Caco-2 (cell line): ENCODE measurements at regions of chr2 and their contacts with region 1.

Region 1: DNA sequence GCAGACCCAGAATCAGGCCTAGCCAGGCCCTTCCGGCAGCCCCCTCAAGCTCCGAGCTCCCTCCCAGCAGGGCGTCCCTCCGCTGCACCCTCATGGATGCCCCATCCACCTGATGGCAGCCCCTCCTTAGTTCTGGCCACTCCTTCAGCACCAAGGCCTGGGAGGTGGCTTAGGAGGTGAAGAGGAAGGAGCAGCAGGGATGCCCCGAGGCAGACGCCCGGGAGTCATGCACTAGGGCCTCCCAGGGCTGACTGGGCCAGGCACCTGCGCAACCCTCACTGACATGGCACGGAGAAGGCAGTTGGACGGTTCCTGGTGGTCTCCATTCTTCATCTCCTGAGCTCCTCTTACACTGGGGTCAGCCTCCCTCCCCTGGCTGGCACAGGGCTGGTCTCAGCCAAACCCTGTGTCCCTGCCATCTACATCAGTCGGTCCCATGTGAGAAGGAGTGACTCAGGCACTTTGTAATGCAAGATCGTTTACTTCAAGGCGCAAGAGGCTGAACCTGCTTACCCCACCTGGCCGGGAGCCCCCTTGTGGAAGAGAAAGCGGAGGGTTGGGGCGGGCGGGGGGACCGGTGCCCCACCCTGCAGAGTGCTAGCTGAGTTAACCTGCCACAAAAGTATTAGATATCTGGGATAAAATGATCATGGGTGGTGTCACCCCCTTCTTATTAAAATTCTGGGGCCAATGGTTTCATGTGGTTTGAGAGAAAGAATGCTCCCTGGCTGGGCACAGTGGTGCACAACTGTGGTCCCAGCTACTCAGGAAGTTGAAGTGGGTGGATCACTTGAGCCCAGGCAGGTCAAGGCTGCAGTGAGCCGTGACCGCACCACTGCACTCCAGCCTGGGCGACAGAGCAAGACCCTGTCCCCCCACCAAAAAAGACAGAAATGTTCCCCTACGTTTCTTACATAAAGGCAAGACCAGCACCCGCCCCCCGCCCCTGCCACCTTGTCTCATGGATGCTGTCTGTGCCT is 53.3 kb upstream of the ID2 start:
- DNase-seq: no peak
- H3K4me3 ChIP-seq: no peak overlapping the region
- H3K4me3 Mint-ChIP-seq: peak overlapping the region; percentile 51
- H3K27ac Mint-ChIP-seq: peak overlapping the region; percentile 65
- H3K4me1 ChIP-seq: peaks cover 90% of the 10 kb centered on the region
- H3K4me1 Mint-ChIP-seq: peaks cover 31% of the 10 kb centered on the region
- H3K27me3 ChIP-seq: no peaks in the 10 kb centered on the region
- H3K27me3 Mint-ChIP-seq: no peaks in the 10 kb centered on the region
- CTCF ChIP-seq: peak in 1 of 2 experiments; percentile 4

Region 2: DNA sequence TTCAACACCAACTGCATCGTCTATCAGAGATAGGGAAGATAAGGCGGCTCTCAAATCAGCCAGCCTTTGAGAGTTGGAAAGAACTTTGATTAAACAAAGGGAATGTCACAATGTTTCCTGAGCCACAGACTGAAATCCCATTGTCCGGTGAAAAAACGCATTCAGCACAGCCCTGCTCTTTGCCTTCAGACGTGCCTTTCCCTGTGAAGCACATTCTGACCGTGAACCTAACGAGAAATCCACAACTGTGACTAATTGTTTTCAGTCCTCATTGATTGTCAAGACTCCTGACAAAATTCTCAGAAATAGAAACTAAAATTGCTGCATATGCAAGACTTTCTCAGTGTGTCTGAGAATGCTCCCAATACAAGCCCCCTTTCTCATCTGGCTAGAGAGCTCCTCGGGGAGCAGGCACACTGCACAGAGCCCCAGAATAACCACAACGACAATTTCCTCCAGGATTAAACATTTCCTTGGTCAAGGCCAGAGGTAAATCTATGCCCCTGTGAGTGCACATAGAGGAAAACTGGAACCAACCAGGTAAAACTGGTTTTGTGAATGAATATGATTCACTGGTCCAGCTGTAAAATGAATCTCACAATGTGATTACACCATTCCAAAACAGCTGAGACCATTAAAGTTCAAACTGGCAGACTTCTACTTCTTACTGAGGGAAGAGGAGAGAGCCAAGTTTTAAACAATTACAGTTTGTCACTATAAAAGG is 508.6 kb before region 1 on chr2:
- CTCF ChIA-PET with region 1: interaction called, 6 read pairs
- POLR2A ChIA-PET with region 1: no interaction called
- intact Hi-C with region 1: loop called (anchors 10 kb)
- DNase-seq: peak in 1 of 2 experiments; percentile 52
- H3K4me3 ChIP-seq: no peak overlapping the region
- H3K4me3 Mint-ChIP-seq: peak overlapping the region; percentile 67
- H3K27ac Mint-ChIP-seq: peak overlapping the region; percentile 78
- H3K4me1 ChIP-seq: peaks cover 35% of the 10 kb centered on the region
- H3K4me1 Mint-ChIP-seq: peaks cover 29% of the 10 kb centered on the region
- H3K27me3 ChIP-seq: no peaks in the 10 kb centered on the region
- H3K27me3 Mint-ChIP-seq: no peaks in the 10 kb centered on the region
- CTCF ChIP-seq: no peak

Region 3: GRCh38 chr2:8456151-8456845 is 172.2 kb before region 1 on chr2:
- CTCF ChIA-PET with region 1: no interaction called
- POLR2A ChIA-PET with region 1: no interaction called
- intact Hi-C with region 1: loop called (anchors 1 kb)
- DNase-seq: no peak
- H3K4me3 ChIP-seq: no peak overlapping the region; the same call in 1 of the 2 replicates
- H3K4me3 Mint-ChIP-seq: peak overlapping the region; percentile 52
- H3K27ac Mint-ChIP-seq: no peak overlapping the region
- H3K4me1 ChIP-seq: peaks cover 19% of the 10 kb centered on the region
- H3K4me1 Mint-ChIP-seq: peaks cover 22% of the 10 kb centered on the region
- H3K27me3 ChIP-seq: no peaks in the 10 kb centered on the region; the same call in 1 of the 2 replicates
- H3K27me3 Mint-ChIP-seq: no peaks in the 10 kb centered on the region
- CTCF ChIP-seq: no peak

Region 4: DNA sequence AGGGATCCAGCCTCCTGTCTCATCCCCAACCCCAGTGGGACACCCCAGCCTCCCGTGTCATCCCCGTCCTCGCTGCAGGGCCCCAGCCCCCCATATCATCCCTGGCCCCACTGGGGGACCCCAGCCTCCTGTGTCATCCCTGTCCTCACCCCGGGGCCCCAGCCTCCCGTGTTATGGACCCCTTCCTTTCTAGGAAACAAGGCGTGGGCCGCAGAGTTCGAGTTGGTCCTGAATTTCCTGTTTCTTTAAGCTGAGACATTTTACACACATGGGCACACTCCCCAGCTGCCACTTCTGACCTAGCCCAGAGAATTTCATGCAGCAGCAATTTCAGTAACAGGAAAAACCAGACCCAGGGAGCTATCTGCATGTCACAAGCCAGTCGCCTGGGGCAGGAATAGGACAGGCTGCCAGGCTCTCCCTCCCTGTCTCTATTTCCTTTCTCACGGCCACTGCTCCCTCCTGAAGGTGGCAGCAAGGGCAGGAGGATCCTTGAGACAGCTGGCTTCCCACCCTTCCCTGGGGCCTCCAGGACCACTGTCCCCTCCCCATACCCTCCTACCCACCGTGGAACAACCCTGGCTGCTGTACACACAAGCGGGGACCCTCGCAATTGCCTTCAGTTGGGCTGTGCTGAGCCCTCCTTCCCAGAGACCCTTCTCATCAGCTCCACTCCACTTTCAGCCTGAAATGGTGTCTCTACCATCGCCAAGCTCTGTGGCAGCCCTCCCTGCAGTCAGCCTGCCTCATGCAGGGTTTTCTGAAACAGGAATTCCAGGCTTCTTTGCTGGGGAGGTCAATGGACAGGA is 88.6 kb before region 1 on chr2:
- CTCF ChIA-PET with region 1: no interaction called
- POLR2A ChIA-PET with region 1: no interaction called
- intact Hi-C with region 1: loop called (anchors 1 kb)
- DNase-seq: peak; percentile 78 to 82
- H3K4me3 ChIP-seq: no peak overlapping the region
- H3K4me3 Mint-ChIP-seq: peak overlapping the region; percentile 51
- H3K27ac Mint-ChIP-seq: peak overlapping the region; percentile 82
- H3K4me1 ChIP-seq: peaks cover 53% of the 10 kb centered on the region
- H3K4me1 Mint-ChIP-seq: peaks cover 37% of the 10 kb centered on the region
- H3K27me3 ChIP-seq: no peaks in the 10 kb centered on the region
- H3K27me3 Mint-ChIP-seq: no peaks in the 10 kb centered on the region
- CTCF ChIP-seq: peak in 1 of 2 experiments; percentile 25

Region 5: DNA sequence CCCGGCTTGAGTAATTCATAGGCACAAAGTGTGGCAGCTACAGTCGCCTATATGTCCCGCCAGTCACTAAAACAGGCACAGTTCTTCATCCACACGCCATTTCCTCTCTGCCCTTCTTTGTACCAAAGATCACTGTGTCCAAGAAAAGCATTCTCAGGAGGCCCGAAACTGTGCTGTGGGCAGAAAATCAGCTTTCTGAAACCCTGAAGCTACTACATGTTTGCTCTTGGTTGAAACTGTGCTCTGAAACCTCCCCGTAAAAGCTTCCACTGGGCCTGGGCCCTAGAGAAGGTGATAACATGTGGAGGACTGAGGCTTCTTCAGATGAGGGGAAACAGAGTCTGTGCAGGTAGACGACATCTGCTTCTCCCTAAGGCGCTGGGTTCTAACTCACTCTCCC is 22.3 kb before region 1 on chr2:
- CTCF ChIA-PET with region 1: interaction called, 3 read pairs
- POLR2A ChIA-PET with region 1: interaction called, 3 read pairs
- intact Hi-C with region 1: loop called (anchors 1 kb)
- DNase-seq: peak in 1 of 2 experiments; percentile 8
- H3K4me3 ChIP-seq: no peak overlapping the region
- H3K4me3 Mint-ChIP-seq: no peak overlapping the region
- H3K27ac Mint-ChIP-seq: peak overlapping the region; percentile 69
- H3K4me1 ChIP-seq: peaks cover 86% of the 10 kb centered on the region
- H3K4me1 Mint-ChIP-seq: peaks cover 69% of the 10 kb centered on the region
- H3K27me3 ChIP-seq: no peaks in the 10 kb centered on the region
- H3K27me3 Mint-ChIP-seq: no peaks in the 10 kb centered on the region
- CTCF ChIP-seq: no peak

Region 6: GRCh38 chr2:8761529-8762164 is 133.1 kb after region 1 on chr2:
- CTCF ChIA-PET with region 1: no interaction called
- POLR2A ChIA-PET with region 1: no interaction called
- intact Hi-C with region 1: loop called (anchors 5 kb)
- DNase-seq: peak in 1 of 2 experiments; percentile 34
- H3K4me3 ChIP-seq: no peak overlapping the region
- H3K4me3 Mint-ChIP-seq: no peak overlapping the region
- H3K27ac Mint-ChIP-seq: no peak overlapping the region
- H3K4me1 ChIP-seq: no peaks in the 10 kb centered on the region
- H3K4me1 Mint-ChIP-seq: no peaks in the 10 kb centered on the region
- H3K27me3 ChIP-seq: no peaks in the 10 kb centered on the region
- H3K27me3 Mint-ChIP-seq: no peaks in the 10 kb centered on the region
- CTCF ChIP-seq: peak; percentile 62 to 64